Dorsolateral prefrontal cortex (tissue), 120 donors: ENCODE measurements at regions of chr4 and their contacts with region 1.

Region 1: DNA sequence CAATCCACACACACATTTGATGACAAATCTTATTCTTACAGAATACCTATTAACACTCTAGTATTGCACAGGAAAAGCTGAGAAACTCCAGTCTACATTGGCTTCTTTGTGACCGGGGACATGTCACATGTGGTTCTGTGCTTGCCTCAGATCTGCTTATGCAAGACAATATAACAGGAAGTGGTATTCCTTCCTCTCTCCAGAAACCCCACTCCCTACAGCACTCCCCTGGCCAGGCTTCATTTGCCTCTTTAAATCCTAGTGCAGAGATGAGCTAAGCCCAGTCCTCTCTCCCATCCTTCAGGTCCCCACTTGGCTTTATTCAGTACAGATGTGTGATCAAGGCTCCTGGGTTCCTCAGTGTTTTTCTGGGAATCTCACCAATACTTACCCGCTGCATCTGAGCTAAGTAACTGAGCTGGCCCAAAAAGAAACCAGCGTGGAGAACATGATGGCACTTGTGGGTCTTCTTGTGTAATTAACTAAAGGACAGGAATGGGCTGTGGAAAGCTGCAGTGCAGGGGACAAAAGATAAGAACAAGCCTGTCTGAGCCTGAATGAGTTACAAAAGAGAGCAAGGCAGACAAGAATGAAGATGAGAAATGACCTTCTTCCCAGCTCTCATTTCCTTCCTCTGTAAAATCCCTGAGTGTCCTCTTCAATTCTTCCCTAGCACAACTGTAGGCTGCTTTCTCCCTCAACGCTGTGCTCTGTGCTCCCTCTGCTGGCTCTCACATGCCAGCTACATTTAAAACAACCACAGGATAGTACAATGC is 105.6 kb downstream of the HNRNPD start:
- DNase-seq: peak in 9 of 10 donors; percentile 46 to 69 (median 58)
- H3K4me3 ChIP-seq: peak overlapping the region in 9 of 59 donors; percentile 1 to 25 (median 10)
- H3K27ac ChIP-seq: peak overlapping the region in 13 of 59 donors; percentile 3 to 55 (median 36)
- H3K27me3 ChIP-seq: peaks cover 0 to 6% (median 0%) of the 10 kb centered on the region in 45 donors
- CTCF ChIP-seq: peak; percentile 50 to 93 (median 78)

Region 2: DNA sequence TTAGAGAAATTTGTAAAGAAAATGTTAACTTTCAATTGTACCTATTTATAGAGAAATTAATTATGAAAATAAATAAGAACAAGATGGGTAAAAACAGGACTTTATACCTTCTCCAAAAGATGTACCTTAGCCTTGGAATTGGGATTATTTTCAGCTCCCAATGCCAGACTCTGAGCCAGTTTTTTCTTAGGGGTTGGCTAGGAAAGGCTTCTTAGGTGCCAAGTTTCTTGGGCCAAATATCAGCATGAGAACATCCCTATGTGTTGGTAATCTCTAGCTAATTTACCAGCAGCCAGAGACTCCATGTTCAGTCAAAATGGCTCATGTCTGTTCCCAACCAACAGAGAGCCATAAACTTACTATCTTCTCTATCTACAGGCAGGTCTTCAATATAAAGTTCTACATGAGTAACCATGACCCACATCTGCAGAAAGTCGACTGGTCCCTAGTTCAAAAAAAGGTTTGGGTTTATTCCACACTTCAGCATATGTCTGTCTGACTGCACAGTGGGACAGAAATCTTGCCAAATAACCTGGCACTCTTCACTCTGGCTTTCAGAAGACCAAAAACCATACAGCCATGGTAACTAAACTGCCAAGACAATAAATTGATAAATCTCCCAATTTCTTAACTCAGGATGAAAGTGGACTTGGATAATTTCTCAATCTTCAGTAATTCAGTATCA is 416.1 kb before region 1 on chr4:
- intact Hi-C with region 1: loop called in 1 of 2 experiments (anchors 10 kb)
- DNase-seq: peak in 1 of 10 donors; percentile 58
- H3K4me3 ChIP-seq: no peak overlapping the region
- H3K27ac ChIP-seq: no peak overlapping the region
- H3K27me3 ChIP-seq: peaks cover 0 to 3% (median 0%) of the 10 kb centered on the region in 45 donors
- CTCF ChIP-seq: no peak